PC-9 (cell line): ENCODE measurements at regions of chr20 and their contacts with region 1.

Region 1: GRCh38 chr20:48580991-48581566 is 246.7 kb downstream of the PREX1 start:
- DNase-seq: no peak
- H3K4me3 ChIP-seq: no peak overlapping the region
- H3K27ac ChIP-seq: no peak overlapping the region
- H3K4me1 ChIP-seq: no peaks in the 10 kb centered on the region
- H3K27me3 ChIP-seq: no peaks in the 10 kb centered on the region
- CTCF ChIP-seq: no peak

Region 2: DNA sequence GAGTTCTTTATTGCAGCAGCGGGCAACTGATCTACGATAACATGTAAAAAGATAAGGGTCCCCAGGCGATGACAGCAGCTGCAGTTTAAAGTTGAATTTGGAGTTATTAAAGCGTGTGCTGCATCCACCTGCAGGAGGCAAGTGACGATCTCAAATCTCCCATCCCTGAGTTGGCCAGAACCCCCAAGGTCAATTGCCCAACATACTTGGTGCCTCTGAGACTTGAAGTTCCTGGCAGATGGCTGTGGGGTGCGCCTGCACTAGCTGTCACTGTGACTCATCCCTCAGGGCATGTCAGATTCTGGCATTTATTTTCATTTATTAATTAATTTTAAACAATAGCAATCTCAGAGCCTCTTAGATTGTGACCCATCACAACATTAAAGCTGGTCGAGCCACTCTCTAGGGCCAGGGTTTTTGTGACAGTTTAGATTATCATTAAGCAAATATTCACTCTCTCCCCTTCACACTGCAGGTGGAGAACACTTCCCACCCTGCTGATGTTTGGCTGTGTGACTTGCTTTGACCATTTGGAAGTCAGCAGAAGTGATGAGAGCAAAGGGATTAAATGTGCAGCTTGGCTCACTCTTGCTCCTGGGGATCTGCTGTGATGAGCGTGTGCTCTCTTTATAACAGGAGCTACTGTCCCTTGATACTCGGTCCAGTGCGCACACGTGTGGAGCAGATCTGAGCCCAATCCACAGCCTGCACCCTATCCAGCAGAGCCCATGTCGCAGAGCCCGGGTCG is 505.2 kb before region 1 on chr20:
- CTCF ChIA-PET with region 1: no interaction called
- POLR2A ChIA-PET with region 1: no interaction called
- intact Hi-C with region 1: no loop called
- DNase-seq: peak; percentile 18 to 56
- H3K4me3 ChIP-seq: no peak overlapping the region
- H3K27ac ChIP-seq: no peak overlapping the region
- H3K4me1 ChIP-seq: no peaks in the 10 kb centered on the region
- H3K27me3 ChIP-seq: no peaks in the 10 kb centered on the region
- CTCF ChIP-seq: no peak

Region 3: DNA sequence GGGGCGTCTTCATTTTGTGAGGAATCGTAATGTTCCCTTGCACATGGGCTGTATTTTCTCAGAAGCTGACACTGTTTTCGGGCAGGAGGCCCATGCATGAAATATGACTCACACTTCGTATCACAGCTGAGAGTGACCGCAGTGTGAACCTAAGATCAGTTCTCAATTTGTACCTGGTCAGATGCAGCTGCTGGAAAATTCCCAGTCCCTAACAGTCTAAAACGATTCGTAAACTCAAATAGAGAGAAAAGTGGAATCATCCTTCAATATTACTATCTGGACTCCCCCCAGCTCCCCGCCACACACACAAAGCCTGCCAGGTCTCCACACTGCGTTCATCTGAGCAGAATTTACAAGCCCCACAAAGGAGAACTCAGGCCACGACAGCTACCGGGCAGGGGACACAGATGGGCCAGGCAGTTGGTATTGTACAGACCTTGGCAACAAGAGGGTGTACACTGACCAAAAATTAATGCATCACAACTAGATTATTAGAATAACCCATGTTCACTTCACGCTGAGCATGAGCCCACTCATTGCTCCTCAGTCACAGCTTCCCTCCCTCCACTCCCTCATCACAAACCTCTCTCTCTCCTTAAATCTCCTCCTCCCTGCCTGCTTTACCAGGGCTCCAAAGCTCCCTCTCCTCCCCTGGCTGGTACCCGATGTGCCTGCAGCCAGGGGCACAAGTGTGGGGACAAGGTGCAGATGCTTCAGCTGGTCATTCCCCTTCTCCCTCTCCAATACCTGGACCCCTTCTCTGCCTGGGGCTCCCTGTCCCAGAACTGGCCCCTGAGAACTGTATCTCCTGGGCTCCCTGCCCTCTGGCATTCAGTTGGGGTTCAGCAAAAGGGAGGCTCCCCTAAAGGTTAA is 241.7 kb before region 1 on chr20:
- CTCF ChIA-PET with region 1: no interaction called
- POLR2A ChIA-PET with region 1: interaction called, 10 read pairs
- intact Hi-C with region 1: no loop called
- DNase-seq: peak; percentile 47 to 76
- H3K4me3 ChIP-seq: no peak overlapping the region
- H3K27ac ChIP-seq: peak overlapping the region; percentile 26; the same call in 1 of the 2 replicates
- H3K4me1 ChIP-seq: peaks cover 18% of the 10 kb centered on the region
- H3K27me3 ChIP-seq: no peaks in the 10 kb centered on the region
- CTCF ChIP-seq: no peak